Testis (tissue), 5 donors: ENCODE measurements at regions of chr12 and their contacts with region 1.

Region 1: DNA sequence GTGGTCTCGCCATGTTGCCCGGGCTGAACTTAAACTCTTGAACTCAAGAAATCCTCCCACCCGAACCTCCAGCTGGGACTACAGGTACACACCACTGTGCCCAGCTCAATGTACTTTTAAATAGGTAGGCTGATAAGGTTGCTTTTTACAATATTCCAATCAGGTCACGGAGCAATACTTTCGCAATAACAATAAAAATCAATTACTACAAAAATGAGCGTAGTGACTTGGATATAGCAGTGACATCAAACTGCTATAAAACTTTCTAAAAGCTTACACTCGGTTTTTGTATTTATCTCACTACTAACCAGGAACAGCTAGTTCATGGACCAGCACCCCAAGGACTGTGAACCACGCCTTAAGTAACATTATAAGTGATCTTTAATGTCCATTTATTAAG is 10.5 kb downstream of the SARNP start:
- DNase-seq: no peak
- H3K4me3 ChIP-seq: no peak overlapping the region
- H3K27ac ChIP-seq: no peak overlapping the region
- H3K4me1 ChIP-seq: no peaks in the 10 kb centered on the region
- H3K27me3 ChIP-seq: no peaks in the 10 kb centered on the region
- CTCF ChIP-seq: no peak
- POLR2A ChIP-seq: no peak

Region 2: DNA sequence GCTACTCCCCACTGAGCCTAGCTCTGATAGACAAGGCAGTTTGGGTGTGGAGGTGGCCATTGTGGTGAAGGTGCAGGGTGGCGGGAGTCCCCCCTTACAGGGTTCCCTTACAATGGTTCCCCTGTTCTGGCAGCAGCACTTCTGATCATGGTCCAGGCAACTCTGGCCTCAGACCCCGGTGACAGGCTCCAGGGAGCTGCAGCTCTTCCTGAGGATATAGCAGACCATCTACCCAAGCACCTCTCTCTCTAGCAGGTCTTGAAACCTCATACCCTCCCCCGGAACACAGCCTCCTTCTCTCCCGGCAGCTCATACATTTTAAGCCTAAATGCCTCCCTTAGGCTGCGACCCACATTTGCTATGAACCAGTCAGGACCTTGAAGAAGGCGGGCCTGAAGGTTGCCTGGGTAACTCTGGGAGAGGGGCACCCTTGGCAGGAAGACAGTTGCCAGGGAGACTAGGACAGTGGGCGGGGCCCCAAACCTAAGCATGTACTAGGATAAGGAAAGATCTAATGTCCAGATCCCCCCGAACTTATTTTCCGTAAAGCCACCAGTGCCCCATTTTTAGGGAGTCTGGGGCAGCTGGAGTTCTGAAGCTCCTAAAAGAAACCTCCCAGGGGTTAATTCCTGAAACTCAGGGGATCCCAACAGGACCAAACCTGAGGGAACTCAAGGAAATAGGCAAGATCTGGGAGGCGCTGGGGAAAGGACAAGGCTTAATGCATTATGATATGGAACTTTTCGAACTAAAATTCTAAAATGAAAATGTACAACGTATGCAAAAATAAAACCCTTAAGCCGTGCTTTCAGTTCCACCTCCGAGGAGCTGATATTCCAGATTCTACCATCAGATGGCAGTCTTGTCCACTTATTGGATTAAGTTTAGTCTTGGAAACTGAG is 68.6 kb before region 1 on chr12:
- intact Hi-C with region 1: loop called (anchors 10 kb)
- DNase-seq: peak; percentile 93
- H3K4me3 ChIP-seq: peak overlapping the region; percentile 46 to 69
- H3K27ac ChIP-seq: peak overlapping the region; percentile 69 to 85
- H3K4me1 ChIP-seq: peaks cover 15% of the 10 kb centered on the region
- H3K27me3 ChIP-seq: no peaks in the 10 kb centered on the region
- CTCF ChIP-seq: peak; percentile 81 to 97 (median 96)
- POLR2A ChIP-seq: no peak